CD8-positive, alpha-beta T cell (primary cell): ENCODE measurements at regions of chr12 and their contacts with region 1.

Region 1: DNA sequence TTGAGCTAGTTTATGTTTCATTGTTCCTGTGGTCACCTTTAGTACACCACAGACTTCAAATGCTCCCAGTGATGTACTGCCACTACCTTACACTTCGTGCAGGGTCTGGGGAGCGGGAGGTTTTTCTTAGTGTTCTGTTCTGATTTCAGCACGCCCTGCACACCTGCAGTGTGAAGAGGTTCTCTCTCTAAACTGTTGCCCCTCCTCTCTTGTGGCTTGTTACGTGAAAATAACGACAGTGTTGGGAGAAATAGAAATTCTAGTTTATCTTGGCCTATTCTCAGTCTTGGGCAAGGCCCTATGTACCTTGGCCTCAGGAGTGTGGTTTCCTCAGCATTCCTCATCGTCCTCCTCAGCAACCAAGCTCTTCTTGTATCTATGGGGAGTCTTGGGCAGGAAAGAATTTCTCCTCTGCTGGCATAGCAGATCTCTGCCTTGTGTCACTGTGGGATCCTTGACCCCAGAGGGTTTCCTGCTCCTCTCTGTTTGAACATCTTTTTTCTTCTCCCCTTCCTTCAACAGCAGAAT is 48.6 kb downstream of the EIF2S3B start:
- DNase-seq: peak in 8 of 9 experiments; percentile 29 to 85 (median 70)
- ATAC-seq: peak; percentile 64
- H3K4me3 ChIP-seq: peak overlapping the region; percentile 61 to 64
- H3K4me3 Mint-ChIP-seq: peak overlapping the region; percentile 90
- H3K27ac ChIP-seq: peak overlapping the region; percentile 80 to 95
- H3K27ac Mint-ChIP-seq: peak overlapping the region; percentile 100
- H3K4me1 ChIP-seq: peaks cover 32% of the 10 kb centered on the region
- H3K4me1 Mint-ChIP-seq: peaks cover 61% of the 10 kb centered on the region
- H3K27me3 ChIP-seq: no peaks in the 10 kb centered on the region
- H3K27me3 Mint-ChIP-seq: no peaks in the 10 kb centered on the region
- CTCF ChIP-seq: no peak

Region 2: GRCh38 chr12:10130042-10130441 is 424.2 kb before region 1 on chr12 and contains the start of gene CLEC7A:
- CTCF ChIA-PET with region 1: no interaction called
- POLR2A ChIA-PET with region 1: no interaction called
- intact Hi-C with region 1: no loop called
- DNase-seq: peak in 1 of 9 experiments; percentile 24
- ATAC-seq: no peak
- H3K4me3 ChIP-seq: no peak within 1 kb of the TSS
- H3K4me3 Mint-ChIP-seq: no peak within 1 kb of the TSS
- H3K27ac ChIP-seq: no peak within 1 kb of the TSS
- H3K27ac Mint-ChIP-seq: no peak within 1 kb of the TSS
- H3K4me1 ChIP-seq: no peaks in the 10 kb centered on the region
- H3K4me1 Mint-ChIP-seq: peaks cover 4% of the 10 kb centered on the region
- H3K27me3 ChIP-seq: peaks cover 0 to 2% of the 10 kb centered on the region in 2 experiments
- H3K27me3 Mint-ChIP-seq: peaks cover 18% of the 10 kb centered on the region
- CTCF ChIP-seq: no peak
- total RNA-seq, gene CLEC7A: 0.92 TPM in 1 of 2 experiments, not detected in the other

Region 3: DNA sequence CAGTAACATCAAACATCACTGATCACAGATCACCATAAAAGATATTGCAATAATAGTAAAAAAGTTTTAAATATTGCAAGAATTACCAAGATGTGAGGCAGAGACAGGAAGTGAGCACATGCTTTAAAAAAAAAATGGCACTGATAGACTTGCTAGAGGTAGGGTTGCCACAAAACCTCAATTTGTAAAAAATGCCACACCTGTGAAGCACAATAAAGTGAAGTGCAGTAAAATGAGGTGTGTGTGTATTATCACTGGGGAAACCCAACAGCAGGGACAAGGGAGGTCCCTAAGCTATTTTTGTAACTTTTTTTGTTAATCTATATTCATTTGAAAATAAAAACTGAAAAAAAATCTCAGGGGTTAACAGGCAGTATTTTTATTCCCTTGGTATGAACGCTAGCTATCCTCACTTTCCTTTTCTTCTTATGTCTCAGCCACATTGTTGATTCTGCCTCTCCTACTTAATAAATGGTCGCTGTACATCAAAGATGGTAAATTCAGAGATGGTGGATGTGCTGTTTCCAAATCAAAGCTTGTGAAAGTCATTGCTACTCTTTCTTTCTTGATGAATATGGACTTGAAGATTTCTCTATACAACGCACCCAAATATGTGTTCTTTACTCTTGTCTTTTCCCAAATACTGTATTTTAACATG is 260.6 kb before region 1 on chr12:
- CTCF ChIA-PET with region 1: no interaction called
- POLR2A ChIA-PET with region 1: no interaction called
- intact Hi-C with region 1: no loop called
- DNase-seq: peak in 4 of 9 experiments; percentile 12 to 91 (median 66)
- ATAC-seq: peak; percentile 91
- H3K4me3 ChIP-seq: no peak overlapping the region
- H3K4me3 Mint-ChIP-seq: peak overlapping the region; percentile 16
- H3K27ac ChIP-seq: peak overlapping the region; percentile 7 to 60
- H3K27ac Mint-ChIP-seq: peak overlapping the region; percentile 77
- H3K4me1 ChIP-seq: peaks cover 34% of the 10 kb centered on the region
- H3K4me1 Mint-ChIP-seq: peaks cover 50% of the 10 kb centered on the region
- H3K27me3 ChIP-seq: no peaks in the 10 kb centered on the region
- H3K27me3 Mint-ChIP-seq: no peaks in the 10 kb centered on the region
- CTCF ChIP-seq: no peak

Region 4: GRCh38 chr12:10721651-10722501 is 167.6 kb after region 1 on chr12:
- CTCF ChIA-PET with region 1: no interaction called
- POLR2A ChIA-PET with region 1: no interaction called
- intact Hi-C with region 1: loop called in 1 of 2 experiments (anchors 1 kb)
- DNase-seq: peak; percentile 26 to 96 (median 63)
- ATAC-seq: peak; percentile 75
- H3K4me3 ChIP-seq: peak overlapping the region; percentile 69 to 72
- H3K4me3 Mint-ChIP-seq: peak overlapping the region; percentile 91
- H3K27ac ChIP-seq: peak overlapping the region; percentile 86 to 94
- H3K27ac Mint-ChIP-seq: peak overlapping the region; percentile 93
- H3K4me1 ChIP-seq: peaks cover 25% of the 10 kb centered on the region
- H3K4me1 Mint-ChIP-seq: peaks cover 50% of the 10 kb centered on the region
- H3K27me3 ChIP-seq: peaks cover 0 to 6% of the 10 kb centered on the region in 2 experiments
- H3K27me3 Mint-ChIP-seq: peaks cover 15% of the 10 kb centered on the region
- CTCF ChIP-seq: no peak

Region 5: DNA sequence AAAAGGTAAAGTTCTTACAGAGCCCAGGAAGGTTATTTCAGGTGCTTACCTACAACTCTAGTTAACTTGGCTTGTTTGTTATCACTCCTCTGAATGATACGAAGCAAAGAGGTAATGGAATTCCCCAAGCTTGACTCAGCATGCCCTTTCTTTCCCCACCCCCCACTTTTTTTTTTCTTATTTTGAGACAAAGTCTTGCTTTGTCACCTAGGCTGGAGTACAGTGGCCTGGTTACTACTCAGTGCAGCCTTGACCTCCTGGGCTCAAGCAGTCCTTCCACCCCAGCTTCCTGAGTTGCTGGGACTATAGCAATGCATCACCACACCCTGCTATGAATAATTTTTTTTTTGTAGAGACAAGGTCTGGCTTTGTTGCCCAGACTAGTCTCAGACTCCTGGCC is 185.9 kb after region 1 on chr12:
- CTCF ChIA-PET with region 1: no interaction called
- POLR2A ChIA-PET with region 1: no interaction called
- intact Hi-C with region 1: no loop called
- DNase-seq: no peak
- ATAC-seq: no peak
- H3K4me3 ChIP-seq: no peak overlapping the region
- H3K4me3 Mint-ChIP-seq: no peak overlapping the region
- H3K27ac ChIP-seq: no peak overlapping the region
- H3K27ac Mint-ChIP-seq: no peak overlapping the region
- H3K4me1 ChIP-seq: no peaks in the 10 kb centered on the region
- H3K4me1 Mint-ChIP-seq: no peaks in the 10 kb centered on the region
- H3K27me3 ChIP-seq: no peaks in the 10 kb centered on the region
- H3K27me3 Mint-ChIP-seq: peaks cover 2% of the 10 kb centered on the region
- CTCF ChIP-seq: no peak